Common myeloid progenitor, CD34-positive (primary cell): ENCODE measurements at regions of chr2 and their contacts with region 1.

Region 1: GRCh38 chr2:43609290-43609937 is 13.6 kb upstream of the THADA start:
- DNase-seq: peak; percentile 45 to 68 (median 58)
- H3K4me3 ChIP-seq: no peak overlapping the region
- H3K27ac ChIP-seq: no peak overlapping the region
- H3K4me1 ChIP-seq: no peaks in the 10 kb centered on the region
- H3K27me3 ChIP-seq: no peaks in the 10 kb centered on the region

Region 2: GRCh38 chr2:43595603-43596412 is 13.6 kb before region 1 on chr2 and contains the start of gene THADA:
- CTCF ChIA-PET with region 1: interaction called, 35 read pairs
- POLR2A ChIA-PET with region 1: interaction called, 3 read pairs
- DNase-seq: peak; percentile 99 to 100 (median 99)
- H3K4me3 ChIP-seq: peak within 1 kb of the TSS; percentile 87 to 94 (median 89)
- H3K27ac ChIP-seq: peak within 1 kb of the TSS; percentile 90 to 98
- H3K4me1 ChIP-seq: peaks cover 10 to 19% (median 15%) of the 10 kb centered on the region in 4 experiments
- H3K27me3 ChIP-seq: no peaks in the 10 kb centered on the region

Region 3: GRCh38 chr2:43707255-43708015 is 98.0 kb after region 1 on chr2:
- CTCF ChIA-PET with region 1: no interaction called
- POLR2A ChIA-PET with region 1: no interaction called
- DNase-seq: no peak
- H3K4me3 ChIP-seq: no peak overlapping the region
- H3K27ac ChIP-seq: no peak overlapping the region
- H3K4me1 ChIP-seq: no peaks in the 10 kb centered on the region
- H3K27me3 ChIP-seq: peaks cover 0 to 3% (median 0%) of the 10 kb centered on the region in 5 experiments